HepG2 (cell line): ENCODE measurements at regions of chr2 and their contacts with region 1.

Region 1: DNA sequence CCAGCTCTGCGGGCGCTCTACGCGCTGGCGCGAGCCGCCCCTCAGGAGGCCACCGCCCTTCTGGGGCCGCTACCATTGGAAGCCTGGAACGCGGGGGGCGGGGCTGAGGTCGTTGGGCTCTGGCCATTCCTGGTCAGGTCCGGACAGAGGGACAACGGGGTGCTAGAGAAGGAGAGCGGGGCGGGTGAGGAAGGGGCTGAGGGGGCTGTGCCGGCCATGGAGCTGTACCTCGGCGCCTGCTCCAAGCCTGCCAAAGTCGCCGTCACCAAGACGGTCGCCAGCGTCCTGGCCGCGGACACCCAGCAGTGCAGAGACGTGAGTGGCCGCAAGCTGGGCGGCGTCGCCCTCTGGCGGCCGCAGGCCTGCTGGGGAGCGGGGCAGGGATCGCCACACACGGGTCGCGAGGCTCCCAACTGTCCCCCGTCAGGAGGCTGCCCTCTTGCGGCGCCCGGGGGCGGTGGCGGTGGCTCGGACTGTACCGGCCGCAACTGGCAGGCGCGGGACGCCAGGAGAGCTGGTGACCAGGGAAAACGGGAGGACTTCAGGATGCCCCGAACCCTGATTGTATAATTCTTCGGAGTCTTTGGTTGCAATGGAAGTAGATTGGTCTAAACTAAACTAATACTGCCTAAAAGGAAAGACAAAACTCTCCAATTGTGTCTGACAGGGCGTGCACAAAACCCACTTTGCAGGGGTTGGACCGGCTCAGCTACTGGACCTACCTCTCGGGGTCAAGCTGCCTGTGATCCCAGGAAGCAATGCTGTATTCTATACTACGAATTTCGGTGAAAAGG is at the start of gene FSIP2:
- DNase-seq: peak; percentile 65
- ATAC-seq: peak; percentile 98
- H3K4me3 ChIP-seq: peak within 1 kb of the TSS; percentile 38 to 64 (median 49); a peak in 5 of 6 replicates
- H3K27ac ChIP-seq: no peak within 1 kb of the TSS
- H3K4me1 ChIP-seq: no peaks in the 10 kb centered on the region
- H3K27me3 ChIP-seq: 0 out of 5 replicates have a peak, but pooled peaks cover 0 to 4% of the 10 kb centered on the region in 2 experiments
- CTCF ChIP-seq: peak; percentile 97
- EP300 ChIP-seq: no peak
- POLR2A ChIP-seq: no peak
- RAD21 ChIP-seq: peak; percentile 97
- total RNA-seq, gene FSIP2: 0.04 and 0.07 TPM in 2 replicates

Region 2: DNA sequence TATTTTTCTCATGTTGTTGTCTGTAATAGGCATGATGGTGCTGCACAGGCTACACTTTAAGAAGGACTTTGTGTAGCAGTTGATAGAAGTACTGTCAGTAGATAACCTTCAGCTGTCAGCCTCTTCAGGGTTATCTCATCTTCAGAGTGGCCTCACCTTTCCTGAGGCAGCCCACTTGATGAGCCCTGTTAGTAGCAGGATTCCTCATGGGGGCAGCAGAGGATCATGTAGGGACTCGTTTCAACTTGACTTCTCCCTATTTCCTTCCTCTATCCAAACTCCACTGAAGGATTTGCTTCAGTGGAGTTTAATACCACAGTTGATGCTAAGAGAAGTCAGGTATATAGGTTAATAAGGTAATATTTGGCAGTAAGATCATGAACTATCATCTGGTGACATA is 530.6 kb before region 1 on chr2:
- CTCF ChIA-PET with region 1: interaction called, 3 read pairs
- POLR2A ChIA-PET with region 1: no interaction called
- in situ Hi-C with region 1: loop called (anchors 25 kb)
- intact Hi-C with region 1: loop called (anchors 2 kb)
- DNase-seq: peak; percentile 60
- ATAC-seq: peak; percentile 99
- H3K4me3 ChIP-seq: no peak overlapping the region
- H3K27ac ChIP-seq: no peak overlapping the region
- H3K4me1 ChIP-seq: no peaks in the 10 kb centered on the region
- H3K27me3 ChIP-seq: no peaks in the 10 kb centered on the region
- CTCF ChIP-seq: peak; percentile 82
- EP300 ChIP-seq: no peak
- POLR2A ChIP-seq: no peak
- RAD21 ChIP-seq: peak; percentile 60; the same call in 1 of the 2 replicates

Region 3: DNA sequence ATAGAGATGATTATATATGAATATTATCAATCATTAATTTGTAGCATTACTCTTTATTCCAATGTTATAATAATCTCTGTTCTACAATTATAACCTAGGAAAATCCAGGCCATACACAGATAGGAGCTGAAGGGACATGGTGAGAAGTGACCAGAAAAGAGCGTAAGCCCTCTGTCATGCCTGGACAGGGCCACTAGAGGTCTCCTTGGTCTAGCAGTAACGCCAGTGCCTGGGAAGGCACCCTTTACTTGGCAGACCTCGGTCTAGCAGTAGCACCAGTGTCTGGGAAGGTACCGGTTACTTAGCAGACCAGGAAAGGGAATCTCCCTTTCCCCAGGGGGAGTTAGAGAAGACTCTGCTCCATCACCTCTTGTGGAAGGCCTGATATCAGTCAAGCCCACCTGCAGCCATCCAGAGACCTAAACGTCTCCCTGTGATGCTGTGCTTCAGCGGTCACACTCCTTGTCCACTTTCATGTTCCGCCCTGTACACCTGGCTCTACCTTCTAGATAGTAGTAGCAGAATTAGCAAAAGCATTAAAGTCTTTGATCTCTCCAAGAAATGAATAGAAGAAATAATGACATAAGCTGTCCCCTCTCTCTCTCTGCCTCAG is 447.7 kb before region 1 on chr2:
- CTCF ChIA-PET with region 1: interaction called, 10 read pairs
- POLR2A ChIA-PET with region 1: no interaction called
- in situ Hi-C with region 1: no loop called
- intact Hi-C with region 1: loop called (anchors 5 kb)
- DNase-seq: peak; percentile 64
- ATAC-seq: peak; percentile 100
- H3K4me3 ChIP-seq: no peak overlapping the region
- H3K27ac ChIP-seq: no peak overlapping the region
- H3K4me1 ChIP-seq: peaks cover 10% of the 10 kb centered on the region
- H3K27me3 ChIP-seq: no peaks in the 10 kb centered on the region
- CTCF ChIP-seq: peak; percentile 74
- EP300 ChIP-seq: no peak
- POLR2A ChIP-seq: no peak
- RAD21 ChIP-seq: peak; percentile 74

Region 4: GRCh38 chr2:185522472-185522871 is 216.4 kb before region 1 on chr2:
- CTCF ChIA-PET with region 1: no interaction called
- POLR2A ChIA-PET with region 1: no interaction called
- in situ Hi-C with region 1: no loop called
- intact Hi-C with region 1: loop called (anchors 10 kb)
- DNase-seq: peak; percentile 8
- ATAC-seq: no peak
- H3K4me3 ChIP-seq: no peak overlapping the region
- H3K27ac ChIP-seq: no peak overlapping the region
- H3K4me1 ChIP-seq: no peaks in the 10 kb centered on the region
- H3K27me3 ChIP-seq: no peaks in the 10 kb centered on the region
- CTCF ChIP-seq: peak; percentile 44
- EP300 ChIP-seq: no peak
- POLR2A ChIP-seq: no peak
- RAD21 ChIP-seq: no peak

Region 5: GRCh38 chr2:185628985-185629384 is 109.9 kb before region 1 on chr2:
- CTCF ChIA-PET with region 1: interaction called, 10 read pairs
- POLR2A ChIA-PET with region 1: no interaction called
- in situ Hi-C with region 1: no loop called
- intact Hi-C with region 1: loop called (anchors 5 kb)
- DNase-seq: peak; percentile 43
- ATAC-seq: peak; percentile 93
- H3K4me3 ChIP-seq: no peak overlapping the region
- H3K27ac ChIP-seq: no peak overlapping the region
- H3K4me1 ChIP-seq: no peaks in the 10 kb centered on the region
- H3K27me3 ChIP-seq: no peaks in the 10 kb centered on the region
- CTCF ChIP-seq: peak; percentile 73
- EP300 ChIP-seq: no peak
- POLR2A ChIP-seq: no peak
- RAD21 ChIP-seq: peak; percentile 41; the same call in 1 of the 2 replicates

Region 6: GRCh38 chr2:185785851-185786473 is 47.1 kb after region 1 on chr2:
- CTCF ChIA-PET with region 1: no interaction called
- POLR2A ChIA-PET with region 1: no interaction called
- in situ Hi-C with region 1: no loop called
- intact Hi-C with region 1: no loop called
- DNase-seq: no peak
- ATAC-seq: no peak
- H3K4me3 ChIP-seq: no peak overlapping the region
- H3K27ac ChIP-seq: no peak overlapping the region
- H3K4me1 ChIP-seq: peaks cover 10% of the 10 kb centered on the region
- H3K27me3 ChIP-seq: no peaks in the 10 kb centered on the region
- CTCF ChIP-seq: no peak
- EP300 ChIP-seq: no peak
- POLR2A ChIP-seq: no peak
- RAD21 ChIP-seq: no peak

Region 7: DNA sequence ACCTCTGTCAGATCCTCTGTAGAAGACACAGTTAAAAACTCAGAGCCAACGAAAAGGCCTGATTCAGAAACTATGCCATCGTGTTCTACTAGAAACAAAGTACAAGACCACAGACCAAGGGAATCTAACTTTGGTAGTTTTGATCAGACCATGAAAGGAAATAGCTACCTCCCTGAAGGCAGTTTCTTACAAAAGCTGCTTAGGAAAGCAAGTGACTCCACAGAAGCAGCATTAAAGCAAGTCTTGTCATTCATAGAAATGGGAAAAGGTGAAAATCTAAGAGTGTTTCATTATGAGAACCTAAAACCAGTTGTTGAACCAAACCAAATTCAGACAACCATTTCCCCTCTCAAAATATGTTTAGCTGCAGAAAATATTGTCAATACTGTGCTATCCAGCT is 57.9 kb after region 1 on chr2:
- CTCF ChIA-PET with region 1: no interaction called
- POLR2A ChIA-PET with region 1: no interaction called
- in situ Hi-C with region 1: no loop called
- intact Hi-C with region 1: no loop called
- DNase-seq: no peak
- ATAC-seq: no peak
- H3K4me3 ChIP-seq: no peak overlapping the region
- H3K27ac ChIP-seq: no peak overlapping the region
- H3K4me1 ChIP-seq: no peaks in the 10 kb centered on the region
- H3K27me3 ChIP-seq: no peaks in the 10 kb centered on the region
- CTCF ChIP-seq: no peak
- EP300 ChIP-seq: no peak
- POLR2A ChIP-seq: no peak
- RAD21 ChIP-seq: no peak